Naive thymus-derived CD4-positive, alpha-beta T cell (primary cell): ENCODE measurements at regions of chr5 and their contacts with region 1.

Region 1: GRCh38 chr5:101009758-101010519 is 106.9 kb upstream of the ST8SIA4 start:
- DNase-seq: no peak
- ATAC-seq: no peak
- H3K4me3 ChIP-seq: no peak overlapping the region
- H3K4me3 Mint-ChIP-seq: no peak overlapping the region
- H3K27ac ChIP-seq: no peak overlapping the region
- H3K27ac Mint-ChIP-seq: no peak overlapping the region
- H3K4me1 ChIP-seq: no peaks in the 10 kb centered on the region
- H3K4me1 Mint-ChIP-seq: no peaks in the 10 kb centered on the region
- H3K27me3 ChIP-seq: no peaks in the 10 kb centered on the region
- H3K27me3 Mint-ChIP-seq: no peaks in the 10 kb centered on the region

Region 2: DNA sequence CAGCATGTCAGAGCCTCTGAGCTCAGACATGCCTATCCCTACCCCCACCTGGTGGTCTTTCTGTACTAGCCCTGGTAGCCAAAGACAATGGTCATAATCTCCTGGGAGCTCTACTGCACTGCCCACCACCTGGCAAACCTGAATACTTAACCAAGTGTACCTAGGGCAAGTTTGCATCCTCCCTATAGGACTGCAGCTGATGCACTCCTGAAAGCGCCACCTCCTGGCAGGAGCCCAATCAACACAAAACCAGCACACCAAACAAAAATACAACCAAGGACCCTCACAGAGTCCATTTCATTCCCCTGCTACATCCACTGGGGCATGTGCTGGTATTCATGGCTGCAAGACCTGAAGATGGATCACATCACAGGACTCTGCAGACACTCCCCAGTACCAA is 489.6 kb before region 1 on chr5:
- CTCF ChIA-PET with region 1: no interaction called
- POLR2A ChIA-PET with region 1: no interaction called
- intact Hi-C with region 1: loop called in 1 of 2 experiments (anchors 5 kb)
- DNase-seq: no peak
- ATAC-seq: no peak
- H3K4me3 ChIP-seq: no peak overlapping the region
- H3K4me3 Mint-ChIP-seq: peak overlapping the region in 1 of 10 donors; percentile 25
- H3K27ac ChIP-seq: no peak overlapping the region
- H3K27ac Mint-ChIP-seq: no peak overlapping the region
- H3K4me1 ChIP-seq: no peaks in the 10 kb centered on the region
- H3K4me1 Mint-ChIP-seq: peaks cover 0 to 5% (median 0%) of the 10 kb centered on the region in 7 donors
- H3K27me3 ChIP-seq: no peaks in the 10 kb centered on the region
- H3K27me3 Mint-ChIP-seq: peaks cover 0 to 38% (median 8%) of the 10 kb centered on the region in 5 donors

Region 3: DNA sequence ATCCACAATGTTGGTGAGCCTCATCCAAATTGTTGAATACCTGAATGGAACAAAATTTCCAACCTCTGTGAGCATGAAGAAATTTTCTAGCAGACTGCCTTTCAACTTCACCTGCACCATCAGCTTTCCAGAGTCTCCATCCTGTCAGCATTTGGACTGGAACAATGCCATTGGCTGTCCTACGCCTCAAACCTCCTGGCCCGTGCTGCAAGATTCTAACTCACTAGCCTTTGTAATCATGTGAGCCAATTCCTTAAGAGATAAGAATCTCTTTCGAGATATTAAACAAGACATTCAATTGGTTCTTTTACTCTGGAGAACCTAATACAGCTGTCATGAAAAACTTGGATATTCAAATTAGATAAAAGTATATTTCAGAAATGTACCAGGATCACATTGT is 70.0 kb before region 1 on chr5:
- CTCF ChIA-PET with region 1: no interaction called
- POLR2A ChIA-PET with region 1: no interaction called
- intact Hi-C with region 1: no loop called
- DNase-seq: no peak
- ATAC-seq: no peak
- H3K4me3 ChIP-seq: no peak overlapping the region
- H3K4me3 Mint-ChIP-seq: no peak overlapping the region
- H3K27ac ChIP-seq: no peak overlapping the region
- H3K27ac Mint-ChIP-seq: no peak overlapping the region
- H3K4me1 ChIP-seq: no peaks in the 10 kb centered on the region
- H3K4me1 Mint-ChIP-seq: no peaks in the 10 kb centered on the region
- H3K27me3 ChIP-seq: no peaks in the 10 kb centered on the region
- H3K27me3 Mint-ChIP-seq: no peaks in the 10 kb centered on the region